Caco-2 (cell line): ENCODE measurements at regions of chr12 and their contacts with region 1.

Region 1: DNA sequence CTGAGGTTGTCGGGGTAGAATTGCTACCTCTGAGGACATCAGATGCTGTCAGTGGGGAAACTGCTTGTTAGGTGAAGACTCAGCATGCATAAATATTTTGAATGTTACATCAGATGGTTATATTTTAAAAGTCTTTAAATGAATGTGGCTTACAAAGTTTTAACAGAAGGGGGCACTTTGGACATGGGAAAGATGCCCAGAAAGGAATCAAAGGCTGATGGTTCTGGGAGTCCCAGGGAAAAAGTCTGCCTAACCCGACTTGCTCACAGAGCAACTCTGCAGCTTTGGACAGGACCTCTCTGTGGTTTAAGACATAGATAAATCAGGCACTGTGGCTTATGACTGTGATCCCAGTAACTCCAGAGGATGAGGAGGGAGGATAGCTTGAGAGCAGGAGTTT is 474.9 kb downstream of the ATP23 start:
- DNase-seq: no peak
- H3K4me3 ChIP-seq: no peak overlapping the region
- H3K4me3 Mint-ChIP-seq: no peak overlapping the region
- H3K27ac Mint-ChIP-seq: peak overlapping the region; percentile 64
- H3K4me1 ChIP-seq: peaks cover 49% of the 10 kb centered on the region
- H3K4me1 Mint-ChIP-seq: peaks cover 54% of the 10 kb centered on the region
- H3K27me3 ChIP-seq: no peaks in the 10 kb centered on the region
- H3K27me3 Mint-ChIP-seq: no peaks in the 10 kb centered on the region
- CTCF ChIP-seq: peak in 1 of 2 experiments; percentile 2

Region 2: DNA sequence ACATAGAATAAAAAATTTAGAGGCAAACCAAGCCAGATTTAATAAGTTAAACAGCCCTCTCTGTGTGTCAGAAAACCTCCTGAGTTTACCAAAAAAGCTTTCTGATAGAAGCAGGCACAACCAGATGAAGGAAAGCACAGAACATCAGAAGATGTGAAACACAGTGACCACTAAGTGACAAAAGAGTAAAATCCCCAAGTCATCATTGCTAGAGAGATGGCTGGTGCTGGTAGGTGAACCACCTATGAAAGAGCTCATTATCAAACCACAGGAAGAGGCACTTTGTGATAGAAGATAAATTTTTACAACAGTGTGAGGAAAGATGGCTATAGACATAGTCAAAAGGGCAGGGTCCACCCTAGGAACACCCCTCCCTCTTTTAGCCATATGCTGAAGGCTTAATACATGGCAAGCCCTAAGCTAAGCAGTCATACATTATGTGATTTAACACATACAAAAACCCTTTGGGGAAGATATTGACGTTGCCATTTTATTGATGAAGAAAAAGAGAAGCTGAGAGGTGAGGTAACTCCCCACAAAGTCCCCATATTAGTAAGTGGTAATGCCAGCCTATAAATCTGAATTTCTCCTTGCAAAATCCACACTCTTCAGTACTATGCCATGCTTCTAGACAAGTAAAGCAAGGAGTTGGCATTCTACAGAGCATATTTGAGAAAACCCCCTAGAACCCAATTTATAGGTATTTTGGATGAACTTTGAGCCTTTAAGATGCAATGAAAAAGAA is 54.2 kb after region 1 on chr12:
- CTCF ChIA-PET with region 1: no interaction called
- POLR2A ChIA-PET with region 1: no interaction called
- intact Hi-C with region 1: no loop called
- DNase-seq: no peak
- H3K4me3 ChIP-seq: no peak overlapping the region
- H3K4me3 Mint-ChIP-seq: no peak overlapping the region
- H3K27ac Mint-ChIP-seq: no peak overlapping the region
- H3K4me1 ChIP-seq: no peaks in the 10 kb centered on the region
- H3K4me1 Mint-ChIP-seq: peaks cover 7% of the 10 kb centered on the region
- H3K27me3 ChIP-seq: no peaks in the 10 kb centered on the region
- H3K27me3 Mint-ChIP-seq: no peaks in the 10 kb centered on the region
- CTCF ChIP-seq: no peak

Region 3: DNA sequence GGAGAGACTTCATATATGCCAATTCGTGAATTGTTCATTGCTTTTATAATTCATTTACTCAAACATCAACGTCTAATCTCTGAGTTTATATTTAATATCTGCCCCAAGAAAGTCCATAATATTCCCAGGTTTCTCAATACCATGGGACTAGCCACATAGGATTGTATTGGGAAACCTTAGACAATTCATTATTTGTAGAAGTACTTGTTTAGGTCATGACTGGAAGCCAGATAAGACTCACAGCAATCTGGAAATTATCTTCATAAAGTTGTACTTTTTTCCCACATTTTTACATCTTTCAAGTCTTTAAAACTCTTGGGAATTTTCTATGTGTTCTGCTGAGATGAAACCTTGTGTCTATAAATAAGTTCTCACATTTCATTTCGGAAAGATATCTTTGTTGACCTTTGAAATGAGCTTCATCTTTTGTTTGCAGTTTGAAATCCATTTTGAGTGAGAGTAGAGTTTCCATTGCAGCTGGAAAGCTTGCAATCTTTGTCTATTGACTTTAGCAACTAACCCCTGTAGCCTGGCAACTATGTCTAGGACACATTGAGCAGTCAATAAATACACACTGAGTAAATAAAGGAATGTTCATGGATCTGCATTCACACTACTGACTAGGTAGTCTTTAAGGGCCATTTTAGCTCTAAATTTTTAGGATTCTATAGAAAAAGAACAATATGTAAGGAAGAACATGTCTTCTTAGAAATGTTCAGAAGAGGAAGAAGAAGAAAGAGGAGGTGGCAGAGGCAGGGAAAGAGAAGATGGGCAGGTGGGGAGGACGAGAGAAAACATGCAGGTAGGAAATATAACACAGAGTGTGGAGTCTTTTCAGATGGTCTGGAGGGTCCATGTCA is 349.6 kb after region 1 on chr12:
- CTCF ChIA-PET with region 1: no interaction called
- POLR2A ChIA-PET with region 1: no interaction called
- intact Hi-C with region 1: loop called (anchors 1 kb)
- DNase-seq: peak; percentile 38 to 72
- H3K4me3 ChIP-seq: no peak overlapping the region
- H3K4me3 Mint-ChIP-seq: peak overlapping the region; percentile 6
- H3K27ac Mint-ChIP-seq: peak overlapping the region; percentile 91
- H3K4me1 ChIP-seq: peaks cover 19% of the 10 kb centered on the region
- H3K4me1 Mint-ChIP-seq: peaks cover 17% of the 10 kb centered on the region
- H3K27me3 ChIP-seq: no peaks in the 10 kb centered on the region
- H3K27me3 Mint-ChIP-seq: no peaks in the 10 kb centered on the region
- CTCF ChIP-seq: no peak